Cardiac septum (tissue), 1 donor: ENCODE measurements at regions of chr19 and their contacts with region 1.

Region 1: GRCh38 chr19:18478569-18479311 is 40.8 kb upstream of the ISYNA1 start:
- DNase-seq: peak; percentile 96

Region 2: DNA sequence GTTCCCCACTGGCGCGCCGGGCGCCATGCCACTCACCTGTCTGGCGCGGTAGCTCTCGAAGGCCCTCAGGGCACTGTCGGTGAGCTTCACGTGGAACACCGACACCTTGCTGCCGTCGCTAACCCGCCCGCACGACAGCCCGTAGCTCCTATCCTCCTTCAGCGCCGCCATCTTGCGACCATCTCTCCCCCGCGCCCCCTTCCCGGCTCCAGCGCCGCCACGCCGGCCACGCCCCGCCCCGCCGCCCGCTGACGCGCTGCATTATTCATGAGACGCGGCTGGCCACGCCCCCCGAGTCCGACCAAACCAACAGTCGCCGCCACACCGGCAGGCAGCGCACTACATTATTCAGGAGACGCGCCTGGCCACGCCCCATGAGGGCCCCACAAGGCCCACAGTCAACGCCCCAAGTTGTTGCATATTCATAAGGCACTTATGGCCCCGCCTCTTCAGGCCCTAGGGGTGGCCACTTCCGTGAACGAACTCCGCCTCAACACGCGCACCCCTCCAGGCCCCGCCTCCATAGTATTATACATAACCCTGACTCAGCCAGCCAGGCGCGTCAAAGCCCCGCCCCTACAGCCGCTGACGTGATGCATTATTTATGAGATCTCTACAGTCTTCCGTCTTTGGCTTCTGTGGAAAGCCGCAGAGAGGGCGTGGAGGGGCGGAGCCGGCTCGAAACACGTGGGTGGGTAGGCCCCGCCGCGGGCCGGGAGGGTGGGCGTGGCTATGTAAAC is 43.3 kb after region 1 on chr19 and contains the start of gene ELL:
- intact Hi-C with region 1: loop called (anchors 5 kb)
- DNase-seq: peak; percentile 100
- total RNA-seq, gene ELL: 9.9 TPM

Region 3: GRCh38 chr19:18542936-18543815 is 64.4 kb after region 1 on chr19 and contains the start of gene FKBP8:
- intact Hi-C with region 1: no loop called
- DNase-seq: peak; percentile 97
- total RNA-seq, gene FKBP8: 161 TPM